CD4-positive, alpha-beta memory T cell (primary cell): ENCODE measurements at regions of chr17 and their contacts with region 1.

Region 1: GRCh38 chr17:73429440-73430164 is 117.8 kb upstream of the CDC42EP4 start:
- DNase-seq: peak; percentile 72 to 78 (median 74)
- H3K4me3 ChIP-seq: no peak overlapping the region
- H3K4me3 Mint-ChIP-seq: peak overlapping the region in 4 of 8 donors; percentile 40 to 67 (median 52)
- H3K27ac ChIP-seq: no peak overlapping the region
- H3K27ac Mint-ChIP-seq: peak overlapping the region in 1 of 7 donors; percentile 77
- H3K4me1 ChIP-seq: peaks cover 3% of the 10 kb centered on the region
- H3K4me1 Mint-ChIP-seq: peaks cover 3 to 13% (median 6%) of the 10 kb centered on the region in 4 donors
- H3K27me3 ChIP-seq: no peaks in the 10 kb centered on the region
- H3K27me3 Mint-ChIP-seq: no peaks in the 10 kb centered on the region

Region 2: DNA sequence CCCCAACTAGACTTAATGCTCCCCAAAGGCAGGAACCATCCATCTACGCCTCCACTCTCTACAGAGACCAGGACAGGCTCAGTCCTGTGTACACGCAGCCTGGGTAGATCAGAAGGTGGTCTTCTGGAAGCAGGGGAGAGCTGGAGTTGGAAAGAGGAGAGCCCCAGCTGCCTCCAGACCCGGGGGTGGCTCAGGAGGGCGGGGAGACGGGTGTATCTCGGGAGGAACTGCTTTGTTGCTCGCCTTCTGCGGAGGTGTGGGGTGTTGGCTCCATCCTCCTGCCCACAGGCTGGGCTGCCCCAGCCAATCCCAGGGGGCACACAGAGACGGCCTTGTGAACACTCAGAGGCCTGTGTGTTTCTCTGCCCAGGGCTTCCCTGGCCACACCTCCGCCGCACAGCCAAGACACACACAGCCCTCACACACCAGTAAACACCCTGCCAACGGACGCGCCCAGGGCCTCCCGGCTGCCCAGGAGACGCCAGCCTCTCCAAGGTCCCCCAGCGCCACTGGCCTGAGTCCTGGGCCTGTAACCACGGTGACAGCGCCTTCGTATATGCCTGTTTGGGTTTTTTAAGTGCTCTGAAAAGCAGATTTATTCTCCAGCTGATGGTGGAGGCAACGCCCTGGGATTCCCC is 25.6 kb after region 1 on chr17:
- CTCF ChIA-PET with region 1: no interaction called
- POLR2A ChIA-PET with region 1: no interaction called
- intact Hi-C with region 1: no loop called
- DNase-seq: no peak
- H3K4me3 ChIP-seq: no peak overlapping the region
- H3K4me3 Mint-ChIP-seq: no peak overlapping the region
- H3K27ac ChIP-seq: no peak overlapping the region
- H3K27ac Mint-ChIP-seq: peak overlapping the region in 1 of 7 donors; percentile 57
- H3K4me1 ChIP-seq: no peaks in the 10 kb centered on the region
- H3K4me1 Mint-ChIP-seq: no peaks in the 10 kb centered on the region
- H3K27me3 ChIP-seq: no peaks in the 10 kb centered on the region
- H3K27me3 Mint-ChIP-seq: peaks cover 0 to 6% of the 10 kb centered on the region in 2 donors

Region 3: GRCh38 chr17:73710095-73710592 is 280.5 kb after region 1 on chr17:
- CTCF ChIA-PET with region 1: interaction called, 168 read pairs
- POLR2A ChIA-PET with region 1: no interaction called
- intact Hi-C with region 1: no loop called
- DNase-seq: peak in 4 of 5 donors; percentile 56 to 66 (median 62)
- H3K4me3 ChIP-seq: no peak overlapping the region
- H3K4me3 Mint-ChIP-seq: no peak overlapping the region
- H3K27ac ChIP-seq: no peak overlapping the region
- H3K27ac Mint-ChIP-seq: peak overlapping the region in 1 of 7 donors; percentile 66
- H3K4me1 ChIP-seq: peaks cover 4% of the 10 kb centered on the region
- H3K4me1 Mint-ChIP-seq: peaks cover 7 to 11% (median 8%) of the 10 kb centered on the region in 4 donors
- H3K27me3 ChIP-seq: no peaks in the 10 kb centered on the region
- H3K27me3 Mint-ChIP-seq: peaks cover 6% of the 10 kb centered on the region in 2 donors

Region 4: DNA sequence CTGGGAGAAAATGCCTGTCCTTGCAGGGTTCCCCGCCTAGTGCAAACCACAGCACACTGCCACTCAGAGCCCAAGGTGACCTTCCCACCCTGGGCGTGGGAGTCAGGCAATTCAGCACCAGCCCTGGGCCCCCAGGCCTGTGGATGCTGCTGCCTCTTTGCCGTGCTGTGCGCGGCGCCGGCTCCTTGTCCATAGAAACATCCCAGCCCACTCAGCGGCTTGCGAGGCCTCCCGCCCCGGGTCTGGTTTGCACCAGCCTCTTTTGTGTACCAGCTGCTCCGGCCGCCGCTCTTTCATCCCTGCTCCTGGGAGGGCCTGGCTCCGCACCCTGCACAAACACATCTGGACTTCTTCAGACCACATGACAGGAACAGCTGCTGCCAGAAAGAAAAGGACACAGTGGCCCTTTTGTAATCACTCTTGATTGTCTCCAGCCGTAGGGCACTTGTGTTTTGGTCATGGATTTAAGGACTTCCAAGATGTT is 290.0 kb after region 1 on chr17:
- CTCF ChIA-PET with region 1: interaction called, 12 read pairs
- POLR2A ChIA-PET with region 1: no interaction called
- intact Hi-C with region 1: no loop called
- DNase-seq: no peak
- H3K4me3 ChIP-seq: no peak overlapping the region
- H3K4me3 Mint-ChIP-seq: peak overlapping the region in 1 of 8 donors; percentile 72
- H3K27ac ChIP-seq: no peak overlapping the region
- H3K27ac Mint-ChIP-seq: peak overlapping the region in 3 of 7 donors; percentile 47 to 90 (median 86)
- H3K4me1 ChIP-seq: peaks cover 40% of the 10 kb centered on the region
- H3K4me1 Mint-ChIP-seq: peaks cover 31 to 63% (median 40%) of the 10 kb centered on the region in 4 donors
- H3K27me3 ChIP-seq: no peaks in the 10 kb centered on the region
- H3K27me3 Mint-ChIP-seq: no peaks in the 10 kb centered on the region

Region 5: DNA sequence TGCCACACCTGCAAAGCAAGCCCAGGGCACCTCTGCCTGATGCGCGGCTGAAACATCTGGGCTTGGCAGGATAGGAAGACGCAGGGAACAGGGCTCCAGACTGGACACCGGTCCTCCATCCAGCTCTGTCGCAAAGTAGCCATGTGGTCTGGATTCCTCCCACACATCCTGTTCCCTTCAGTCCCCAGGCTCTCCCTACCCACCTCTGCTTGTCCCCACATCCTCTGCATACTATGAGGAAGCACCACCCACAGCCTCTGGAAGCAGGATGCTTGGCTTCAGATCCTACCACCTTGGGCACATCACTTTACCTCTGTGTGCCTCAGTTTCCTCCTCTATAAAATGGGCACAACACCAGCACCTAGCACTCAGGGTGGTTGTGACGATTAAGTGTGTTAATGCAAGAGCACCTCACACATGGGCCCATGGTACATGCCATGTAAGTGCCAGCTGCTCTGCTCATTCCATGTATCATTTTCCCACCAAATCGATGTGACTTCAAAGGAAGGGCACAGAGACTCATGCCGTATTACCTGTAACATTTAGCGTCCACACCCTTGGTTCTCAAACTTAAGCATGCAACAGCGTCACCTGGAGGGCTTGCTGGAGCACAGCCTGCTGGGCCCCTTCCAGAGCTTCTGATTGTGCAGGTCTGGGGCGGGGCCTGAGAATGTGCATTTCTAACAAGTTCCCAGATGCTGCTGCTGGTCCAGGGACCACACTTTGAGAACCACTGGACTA is 353.2 kb after region 1 on chr17:
- CTCF ChIA-PET with region 1: interaction called, 10 read pairs
- POLR2A ChIA-PET with region 1: no interaction called
- intact Hi-C with region 1: loop called (anchors 1 kb)
- DNase-seq: no peak
- H3K4me3 ChIP-seq: no peak overlapping the region
- H3K4me3 Mint-ChIP-seq: peak overlapping the region in 1 of 8 donors; percentile 51
- H3K27ac ChIP-seq: no peak overlapping the region
- H3K27ac Mint-ChIP-seq: no peak overlapping the region
- H3K4me1 ChIP-seq: no peaks in the 10 kb centered on the region
- H3K4me1 Mint-ChIP-seq: peaks cover 0 to 11% (median 6%) of the 10 kb centered on the region in 4 donors
- H3K27me3 ChIP-seq: no peaks in the 10 kb centered on the region
- H3K27me3 Mint-ChIP-seq: peaks cover 3 to 9% of the 10 kb centered on the region in 2 donors

Region 6: GRCh38 chr17:73956669-73957465 is 527.3 kb after region 1 on chr17:
- CTCF ChIA-PET with region 1: interaction called, 7 read pairs
- POLR2A ChIA-PET with region 1: no interaction called
- intact Hi-C with region 1: loop called (anchors 1 kb)
- DNase-seq: peak; percentile 38 to 57 (median 44)
- H3K4me3 ChIP-seq: no peak overlapping the region
- H3K4me3 Mint-ChIP-seq: peak overlapping the region in 1 of 8 donors; percentile 24
- H3K27ac ChIP-seq: no peak overlapping the region
- H3K27ac Mint-ChIP-seq: no peak overlapping the region
- H3K4me1 ChIP-seq: peaks cover 18% of the 10 kb centered on the region
- H3K4me1 Mint-ChIP-seq: peaks cover 0 to 8% (median 3%) of the 10 kb centered on the region in 4 donors
- H3K27me3 ChIP-seq: peaks cover 3% of the 10 kb centered on the region
- H3K27me3 Mint-ChIP-seq: peaks cover 3 to 5% of the 10 kb centered on the region in 2 donors

Region 7: GRCh38 chr17:73998653-73999645 is 569.3 kb after region 1 on chr17:
- CTCF ChIA-PET with region 1: interaction called, 22 read pairs
- POLR2A ChIA-PET with region 1: no interaction called
- intact Hi-C with region 1: no loop called
- DNase-seq: peak in 4 of 5 donors; percentile 45 to 51 (median 47)
- H3K4me3 ChIP-seq: no peak overlapping the region
- H3K4me3 Mint-ChIP-seq: no peak overlapping the region
- H3K27ac ChIP-seq: no peak overlapping the region
- H3K27ac Mint-ChIP-seq: peak overlapping the region in 1 of 7 donors; percentile 8
- H3K4me1 ChIP-seq: no peaks in the 10 kb centered on the region
- H3K4me1 Mint-ChIP-seq: peaks cover 0 to 7% (median 3%) of the 10 kb centered on the region in 4 donors
- H3K27me3 ChIP-seq: peaks cover under 1% of the 10 kb centered on the region
- H3K27me3 Mint-ChIP-seq: peaks cover 6 to 21% of the 10 kb centered on the region in 2 donors

Region 8: GRCh38 chr17:74176546-74177001 is 747.0 kb after region 1 on chr17:
- CTCF ChIA-PET with region 1: interaction called, 23 read pairs
- POLR2A ChIA-PET with region 1: no interaction called
- intact Hi-C with region 1: no loop called
- DNase-seq: peak in 4 of 5 donors; percentile 13 to 20 (median 18)
- H3K4me3 ChIP-seq: no peak overlapping the region
- H3K4me3 Mint-ChIP-seq: no peak overlapping the region
- H3K27ac ChIP-seq: no peak overlapping the region
- H3K27ac Mint-ChIP-seq: no peak overlapping the region
- H3K4me1 ChIP-seq: no peaks in the 10 kb centered on the region
- H3K4me1 Mint-ChIP-seq: no peaks in the 10 kb centered on the region
- H3K27me3 ChIP-seq: peaks cover 4% of the 10 kb centered on the region
- H3K27me3 Mint-ChIP-seq: peaks cover 21 to 41% of the 10 kb centered on the region in 2 donors